ENCODE measurements at regions of chr2 and their contacts with region 1.

Region 1: DNA sequence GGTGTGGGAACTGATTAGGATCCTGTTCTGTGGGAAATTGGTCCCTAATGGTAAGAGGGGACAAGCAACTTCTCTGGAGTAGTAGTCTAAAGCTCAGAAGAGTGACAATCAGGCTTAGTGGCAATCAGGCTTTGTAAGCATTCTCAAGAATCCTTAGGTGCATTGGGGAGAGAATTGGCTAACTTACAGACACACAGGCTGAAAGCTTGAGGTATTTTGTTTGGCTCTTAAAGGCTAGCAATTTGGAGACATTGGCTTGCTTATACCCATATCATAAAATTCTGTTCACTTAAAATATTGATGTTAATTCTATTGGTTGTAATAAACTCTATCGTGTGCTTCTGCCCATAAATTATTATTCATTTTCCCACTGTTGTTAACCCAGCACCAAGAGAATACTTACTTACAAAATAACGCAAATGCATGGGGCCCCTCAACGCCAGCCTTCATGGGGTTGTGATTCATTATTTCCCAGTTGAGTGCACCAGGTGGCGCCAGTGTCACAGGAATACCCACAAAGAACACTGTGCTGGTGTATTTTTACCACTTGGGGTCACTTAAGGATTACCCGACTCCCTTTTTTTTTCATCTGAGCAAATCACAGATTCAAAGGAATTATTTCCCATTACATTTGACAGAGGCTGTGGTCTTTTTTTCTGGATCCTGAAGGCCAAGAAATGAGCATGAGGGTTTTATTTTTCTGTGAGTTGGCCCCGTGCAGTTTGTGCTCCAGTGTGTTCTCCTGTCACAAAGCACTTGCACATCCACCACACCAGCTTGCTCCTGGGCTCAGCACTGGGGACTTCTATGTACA is 45.5 kb downstream of the DDX1 start:
- DNase-seq: no peak
- ATAC-seq: peak; percentile 88

Region 2: GRCh38 chr2:15506231-15506819 is 130.9 kb before region 1 on chr2:
- intact Hi-C with region 1: no loop called
- DNase-seq: no peak
- ATAC-seq: no peak

Region 3: DNA sequence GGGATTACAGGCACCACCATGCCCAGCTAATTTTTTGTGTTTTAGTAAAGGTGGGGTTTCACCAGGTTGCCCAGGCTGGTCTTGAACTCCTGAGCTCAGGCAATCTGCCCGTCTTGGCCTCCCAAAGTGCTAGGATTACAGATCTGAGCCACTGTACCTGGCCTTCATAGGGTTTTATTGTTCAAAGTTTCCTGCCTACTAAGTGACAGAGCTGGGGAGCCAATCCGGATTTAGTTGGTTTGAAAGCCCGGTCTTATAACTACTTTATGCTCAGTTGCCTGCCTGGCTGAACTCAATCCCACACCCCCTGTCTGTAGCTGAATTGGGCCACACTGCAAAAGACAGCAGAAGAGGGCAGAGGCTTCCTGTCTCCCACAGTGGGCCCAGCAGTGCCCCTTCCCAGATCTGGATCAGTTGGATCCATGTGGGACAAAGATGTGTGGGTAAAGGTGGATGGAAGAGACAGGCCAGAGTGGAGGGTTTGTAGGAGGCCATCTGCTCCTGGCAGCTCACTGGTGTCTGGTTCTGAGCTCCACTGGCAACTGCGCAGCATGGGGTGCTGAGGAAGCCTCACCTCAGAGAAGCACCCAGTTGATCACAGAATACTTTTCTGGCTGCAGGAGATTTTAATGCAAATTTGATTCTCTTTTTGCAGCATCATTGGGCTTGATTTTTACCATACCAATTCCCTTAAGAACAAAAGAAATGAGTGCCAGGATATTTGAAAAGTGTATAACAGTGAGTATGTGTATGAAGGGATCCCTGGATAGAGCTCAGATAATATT is 99.4 kb after region 1 on chr2:
- intact Hi-C with region 1: no loop called
- DNase-seq: no peak
- ATAC-seq: no peak

Region 4: DNA sequence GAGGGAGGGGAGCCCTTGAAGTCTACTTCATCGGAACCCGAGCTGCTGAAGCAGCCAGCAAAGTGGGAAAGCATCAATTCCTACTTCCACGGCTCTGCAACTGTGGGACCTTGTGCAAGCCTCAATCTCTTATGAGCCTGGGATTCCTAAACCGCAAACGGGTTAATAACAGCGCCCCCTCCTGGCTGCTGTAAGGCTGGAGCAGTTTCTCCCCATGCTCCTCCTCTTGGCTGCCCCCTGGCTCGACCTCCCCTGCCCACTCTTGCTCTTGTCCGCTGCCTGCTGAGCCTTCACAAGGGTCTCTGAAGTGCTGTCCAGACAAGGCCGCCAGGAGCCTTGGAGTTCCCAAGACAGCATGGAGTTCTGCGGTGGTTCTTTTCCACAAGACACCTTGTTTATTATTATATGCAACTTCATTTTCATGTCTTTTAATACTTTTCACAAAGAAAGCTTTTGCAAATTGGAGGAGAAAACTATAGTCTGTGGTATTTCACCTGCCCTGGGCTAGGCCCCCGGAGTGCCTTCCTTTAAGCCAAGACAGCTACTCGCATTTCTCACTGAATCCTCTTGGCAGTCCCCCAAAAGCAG is 111.7 kb after region 1 on chr2:
- intact Hi-C with region 1: loop called (anchors 5 kb)
- DNase-seq: no peak
- ATAC-seq: no peak

Region 5: DNA sequence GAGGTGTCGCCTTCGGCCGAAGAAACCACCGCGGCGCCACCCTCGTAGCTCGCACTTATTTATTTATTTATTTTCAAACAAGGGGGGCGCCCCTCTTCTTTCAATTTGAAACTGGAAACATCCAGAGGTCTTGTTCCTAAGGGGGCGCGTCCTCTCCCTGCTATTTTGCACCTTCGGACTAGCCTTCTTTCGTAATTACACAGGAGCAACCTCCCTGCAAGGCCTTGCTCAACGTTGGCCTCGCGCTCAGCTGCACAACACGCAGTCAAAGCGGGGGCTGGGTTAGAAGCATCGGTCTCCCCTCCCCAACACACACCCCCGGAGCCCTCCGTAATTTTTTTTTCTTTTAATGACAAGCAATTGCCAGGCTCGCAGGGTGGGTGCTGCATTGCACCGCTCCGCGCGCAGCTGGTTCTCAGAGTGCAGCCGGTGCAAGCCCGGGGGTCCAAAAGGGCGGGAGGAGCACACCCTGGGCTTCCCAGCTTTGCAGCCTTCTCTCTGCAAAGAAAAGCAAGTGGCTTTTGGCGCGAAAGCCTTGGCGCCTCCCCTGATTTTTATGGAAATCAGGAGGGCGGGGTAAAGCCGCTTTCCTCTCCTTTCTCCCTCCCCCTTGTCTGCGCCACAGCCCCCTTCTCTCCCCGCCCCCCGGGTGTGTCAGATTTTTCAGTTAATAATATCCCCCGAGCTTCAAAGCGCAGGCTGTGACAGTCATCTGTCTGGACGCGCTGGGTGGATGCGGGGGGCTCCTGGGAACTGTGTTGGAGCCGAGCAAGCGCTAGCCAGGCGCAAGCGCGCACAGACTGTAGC is 302.9 kb after region 1 on chr2 and contains the start of gene MYCN:
- intact Hi-C with region 1: loop called (anchors 2 kb)
- DNase-seq: no peak
- ATAC-seq: peak; percentile 19
- total RNA-seq, gene MYCN: 0.54 TPM

Region 6: GRCh38 chr2:16281451-16282336 is 644.5 kb after region 1 on chr2:
- intact Hi-C with region 1: loop called (anchors 2 kb)
- DNase-seq: no peak
- ATAC-seq: peak; percentile 48

Region 7: DNA sequence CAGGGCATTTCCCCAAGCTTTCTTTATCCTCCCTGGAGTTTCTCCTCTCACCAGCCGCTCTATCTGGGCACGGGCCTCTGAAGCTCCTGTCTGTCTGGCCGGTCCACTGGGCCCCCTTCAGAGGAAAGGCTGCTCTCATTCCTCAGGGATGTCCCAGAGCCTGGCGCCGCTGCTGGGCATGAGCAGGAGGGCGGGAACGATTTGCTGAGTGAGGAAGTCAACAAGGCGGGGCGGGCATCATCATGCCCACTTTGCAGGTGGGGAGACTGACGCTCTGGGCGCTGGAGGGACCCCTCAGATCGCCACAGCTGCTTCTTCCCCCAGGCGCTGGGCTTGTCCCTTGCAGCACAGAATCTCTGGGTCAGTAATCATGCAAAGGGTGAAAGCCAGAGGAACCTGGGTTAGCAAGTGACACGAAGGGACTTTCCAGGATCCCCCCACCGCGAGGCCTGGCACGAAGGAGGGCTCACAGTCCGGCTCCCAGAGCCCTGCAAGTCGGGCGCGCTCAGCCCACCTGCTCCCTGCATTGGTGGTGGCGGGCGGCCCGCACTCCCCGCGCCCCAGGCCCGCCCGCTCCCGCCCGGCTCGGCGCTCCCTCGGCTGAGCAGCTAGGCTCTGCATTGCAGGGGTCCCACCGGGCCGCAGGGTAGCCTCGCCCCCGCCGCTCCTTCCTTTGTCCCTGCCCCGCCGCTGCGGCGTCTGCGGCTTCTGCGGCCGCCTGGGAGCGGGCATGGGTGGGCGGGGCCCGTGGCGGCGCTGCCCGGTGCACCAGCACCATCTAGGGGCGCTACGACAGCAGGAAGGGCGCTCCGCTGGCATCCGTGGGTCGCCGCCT is 870.7 kb after region 1 on chr2:
- intact Hi-C with region 1: loop called (anchors 1 kb)
- DNase-seq: peak; percentile 56
- ATAC-seq: peak; percentile 82

Region 8: DNA sequence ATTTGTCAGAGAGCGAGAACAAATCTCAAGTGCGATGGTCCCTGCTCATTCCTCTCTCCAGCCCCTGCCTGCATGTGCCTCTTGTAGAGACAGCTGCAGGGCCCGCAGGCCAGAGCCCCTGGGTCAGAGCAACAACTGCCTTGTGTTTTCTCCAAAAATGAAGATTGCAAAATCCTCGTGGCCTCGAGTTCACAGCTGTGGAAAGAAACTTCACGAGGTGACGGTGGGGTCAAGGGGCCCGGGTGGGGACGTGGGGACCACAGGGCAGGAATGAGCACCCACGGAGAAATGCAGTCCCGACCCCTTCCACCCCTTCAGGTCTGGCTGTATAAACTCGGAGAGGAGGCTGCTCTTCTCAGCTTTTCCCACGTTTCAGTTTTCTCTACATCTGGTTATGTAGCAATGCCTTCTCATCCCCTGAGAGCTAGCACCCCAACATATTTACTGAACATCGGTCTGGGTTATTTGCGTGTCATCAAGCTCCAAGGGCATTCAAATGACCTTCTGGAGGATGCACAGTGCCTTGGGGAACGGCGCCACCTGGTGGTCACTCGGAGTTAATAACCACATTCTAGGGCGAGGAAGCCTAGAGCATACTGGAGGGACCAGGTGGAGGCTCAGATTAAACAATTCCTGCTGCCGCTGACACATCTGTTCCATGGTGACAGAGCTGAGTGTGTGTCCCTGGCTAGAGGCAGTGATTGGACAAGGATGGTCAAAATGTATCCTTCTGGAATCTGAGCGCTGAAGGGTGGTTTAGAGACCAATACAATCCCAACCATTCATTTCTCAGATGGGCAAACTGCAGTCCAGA is 1119.9 kb after region 1 on chr2:
- intact Hi-C with region 1: loop called (anchors 10 kb)
- DNase-seq: peak; percentile 91
- ATAC-seq: peak; percentile 87

Measured in Right ventricle myocardium inferior (tissue), 1 donor.